ENCODE measurements at regions of chr1 and their contacts with region 1.

Region 1: GRCh38 chr1:47437447-47438164 is at the start of gene FOXD2:
- DNase-seq: peak; percentile 86
- H3K4me3 Mint-ChIP-seq: peak within 1 kb of the TSS; percentile 92
- H3K27ac Mint-ChIP-seq: peak within 1 kb of the TSS; percentile 35
- H3K4me1 Mint-ChIP-seq: peaks cover 17% of the 10 kb centered on the region
- H3K27me3 Mint-ChIP-seq: no peaks in the 10 kb centered on the region
- CTCF ChIP-seq: peak; percentile 97
- total RNA-seq, gene FOXD2: 0.27 and 0.44 TPM in 2 replicates

Region 2: DNA sequence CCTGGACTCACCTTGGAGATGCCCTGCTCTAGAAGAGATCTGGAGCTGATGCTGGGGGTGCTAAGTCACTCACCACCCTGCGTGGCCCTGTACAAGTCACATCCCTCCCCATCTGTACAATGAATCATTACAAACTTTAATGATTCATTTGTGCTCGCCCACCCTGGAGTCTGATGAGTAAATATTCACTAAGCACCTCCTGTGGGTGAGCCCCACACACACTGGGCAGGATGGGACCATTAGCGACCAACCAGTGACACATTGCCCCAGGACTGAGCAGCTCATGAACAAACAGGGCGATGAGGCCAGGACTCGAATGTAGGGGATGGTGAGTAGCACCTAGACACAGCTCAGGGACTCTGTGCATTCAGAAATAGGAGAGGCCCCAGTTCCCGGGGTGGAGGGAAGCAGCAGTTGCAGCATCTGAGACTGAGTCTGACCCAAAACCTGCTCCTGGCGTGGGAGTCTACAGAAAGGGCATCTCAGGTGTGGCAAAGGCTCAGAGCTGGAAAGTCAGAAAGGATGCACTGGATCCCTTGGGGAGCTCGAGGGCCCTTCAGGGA is 229.7 kb before region 1 on chr1:
- CTCF ChIA-PET with region 1: no interaction called
- POLR2A ChIA-PET with region 1: no interaction called
- intact Hi-C with region 1: no loop called
- DNase-seq: no peak
- H3K4me3 Mint-ChIP-seq: no peak overlapping the region
- H3K27ac Mint-ChIP-seq: no peak overlapping the region
- H3K4me1 Mint-ChIP-seq: no peaks in the 10 kb centered on the region
- H3K27me3 Mint-ChIP-seq: peaks cover 14% of the 10 kb centered on the region
- CTCF ChIP-seq: no peak

Region 3: GRCh38 chr1:47388891-47389238 is 48.7 kb before region 1 on chr1:
- CTCF ChIA-PET with region 1: interaction called, 178 read pairs
- POLR2A ChIA-PET with region 1: interaction called, 7 read pairs
- intact Hi-C with region 1: no loop called
- DNase-seq: peak; percentile 81
- H3K4me3 Mint-ChIP-seq: no peak overlapping the region
- H3K27ac Mint-ChIP-seq: no peak overlapping the region
- H3K4me1 Mint-ChIP-seq: no peaks in the 10 kb centered on the region
- H3K27me3 Mint-ChIP-seq: no peaks in the 10 kb centered on the region
- CTCF ChIP-seq: peak; percentile 94

Region 4: DNA sequence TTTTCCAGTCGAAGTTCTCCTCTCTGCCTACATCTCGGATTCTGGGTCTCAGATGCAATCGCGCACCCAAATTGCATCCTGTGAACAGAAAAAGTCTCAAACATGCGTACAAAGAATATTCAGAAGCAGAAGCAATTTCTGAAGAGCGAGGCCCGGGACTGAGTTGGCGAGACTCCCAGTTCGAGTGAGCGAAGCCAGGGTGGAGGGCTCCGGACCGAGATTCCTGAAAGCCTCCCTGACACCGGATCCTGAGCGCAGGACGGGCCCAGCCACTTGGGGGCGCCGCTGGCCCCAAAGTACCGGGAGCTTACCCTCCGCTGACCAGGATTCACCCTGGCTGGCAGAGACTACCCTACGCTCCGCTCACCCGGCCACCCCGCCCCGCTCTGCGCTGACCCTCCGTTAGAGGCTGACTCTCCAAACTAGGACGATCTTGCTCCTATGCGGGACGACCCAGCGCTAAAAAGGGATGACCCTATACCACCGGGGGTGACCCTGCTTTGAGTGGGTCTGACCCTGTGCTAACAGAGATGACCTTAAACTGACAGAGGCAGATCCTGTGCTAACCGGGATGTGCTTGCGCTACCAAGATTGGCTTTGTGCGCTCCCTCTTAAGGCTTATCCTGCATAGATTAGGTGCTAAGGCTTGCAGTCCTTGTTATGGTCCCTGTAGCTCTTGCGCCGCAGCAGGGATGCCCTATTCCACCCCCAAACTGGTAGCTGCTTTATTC is 12.4 kb after region 1 on chr1:
- CTCF ChIA-PET with region 1: interaction called, 22 read pairs
- POLR2A ChIA-PET with region 1: interaction called, 3 read pairs
- intact Hi-C with region 1: no loop called
- DNase-seq: peak; percentile 17
- H3K4me3 Mint-ChIP-seq: no peak overlapping the region
- H3K27ac Mint-ChIP-seq: no peak overlapping the region
- H3K4me1 Mint-ChIP-seq: no peaks in the 10 kb centered on the region
- H3K27me3 Mint-ChIP-seq: peaks cover 42% of the 10 kb centered on the region
- CTCF ChIP-seq: peak; percentile 39

Region 5: GRCh38 chr1:47558601-47559593 is 121.3 kb after region 1 on chr1:
- CTCF ChIA-PET with region 1: interaction called, 10 read pairs
- POLR2A ChIA-PET with region 1: no interaction called
- intact Hi-C with region 1: no loop called
- DNase-seq: no peak
- H3K4me3 Mint-ChIP-seq: no peak overlapping the region
- H3K27ac Mint-ChIP-seq: no peak overlapping the region
- H3K4me1 Mint-ChIP-seq: peaks cover 21% of the 10 kb centered on the region
- H3K27me3 Mint-ChIP-seq: no peaks in the 10 kb centered on the region
- CTCF ChIP-seq: no peak

Region 6: GRCh38 chr1:47703981-47704596 is 266.5 kb after region 1 on chr1:
- CTCF ChIA-PET with region 1: interaction called, 696 read pairs
- POLR2A ChIA-PET with region 1: interaction called, 7 read pairs
- intact Hi-C with region 1: loop called (anchors 1 kb)
- DNase-seq: peak; percentile 66
- H3K4me3 Mint-ChIP-seq: no peak overlapping the region
- H3K27ac Mint-ChIP-seq: no peak overlapping the region
- H3K4me1 Mint-ChIP-seq: no peaks in the 10 kb centered on the region
- H3K27me3 Mint-ChIP-seq: peaks cover 15% of the 10 kb centered on the region
- CTCF ChIP-seq: peak; percentile 21

Region 7: DNA sequence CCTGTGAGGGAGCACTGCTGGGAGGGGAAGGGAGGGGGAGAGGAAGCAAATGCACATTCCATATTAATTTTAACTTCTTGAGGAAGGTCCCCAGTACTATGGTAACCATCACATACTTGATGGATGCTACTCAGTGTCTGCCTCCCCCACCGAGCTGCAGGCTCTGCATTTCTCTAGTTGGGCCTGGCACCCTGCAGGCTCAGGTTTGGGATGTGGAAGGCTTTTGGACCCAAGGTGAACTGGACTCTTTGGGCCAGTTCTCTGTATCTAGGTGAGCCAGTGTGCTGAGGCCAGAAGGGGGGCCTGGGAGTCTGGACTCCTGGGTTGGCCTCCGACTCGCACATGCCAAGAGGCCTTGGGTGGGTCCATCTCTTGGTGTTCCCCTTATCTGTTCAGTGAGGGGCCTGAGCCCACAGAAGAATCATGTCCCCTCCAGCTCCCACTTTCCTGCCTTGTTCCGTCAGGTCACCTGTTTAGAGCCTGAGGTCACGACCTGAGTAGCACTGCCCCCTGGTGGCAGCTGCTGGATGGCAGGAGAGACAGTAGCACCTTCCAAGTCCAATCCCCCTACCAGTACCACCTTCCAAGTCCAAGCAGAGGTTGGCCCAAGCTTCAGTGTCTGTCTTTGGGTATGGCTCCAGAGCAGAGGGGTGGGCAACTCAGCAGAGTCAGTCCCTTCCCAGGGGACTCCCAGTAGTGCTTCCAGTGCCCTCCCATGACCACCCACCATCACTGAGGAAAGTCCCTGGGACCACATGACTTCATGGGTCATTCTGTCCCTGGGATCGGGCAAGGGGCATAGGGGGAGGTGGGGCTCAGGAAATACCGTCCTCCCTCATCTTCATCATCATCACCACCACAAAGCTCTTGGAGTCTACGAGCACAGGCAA is 317.7 kb after region 1 on chr1:
- CTCF ChIA-PET with region 1: no interaction called
- POLR2A ChIA-PET with region 1: no interaction called
- intact Hi-C with region 1: no loop called
- DNase-seq: peak; percentile 40
- H3K4me3 Mint-ChIP-seq: no peak overlapping the region
- H3K27ac Mint-ChIP-seq: no peak overlapping the region
- H3K4me1 Mint-ChIP-seq: peaks cover 7% of the 10 kb centered on the region
- H3K27me3 Mint-ChIP-seq: no peaks in the 10 kb centered on the region
- CTCF ChIP-seq: peak; percentile 52

Region 8: GRCh38 chr1:48236716-48237470 is 799.3 kb after region 1 on chr1:
- CTCF ChIA-PET with region 1: no interaction called
- POLR2A ChIA-PET with region 1: no interaction called
- intact Hi-C with region 1: loop called (anchors 2 kb)
- DNase-seq: peak; percentile 43
- H3K4me3 Mint-ChIP-seq: no peak overlapping the region
- H3K27ac Mint-ChIP-seq: no peak overlapping the region
- H3K4me1 Mint-ChIP-seq: no peaks in the 10 kb centered on the region
- H3K27me3 Mint-ChIP-seq: no peaks in the 10 kb centered on the region
- CTCF ChIP-seq: peak; percentile 74

Measured in MCF 10A (cell line).